ENCODE measurements at regions of chr12 and their contacts with region 1.

Region 1: DNA sequence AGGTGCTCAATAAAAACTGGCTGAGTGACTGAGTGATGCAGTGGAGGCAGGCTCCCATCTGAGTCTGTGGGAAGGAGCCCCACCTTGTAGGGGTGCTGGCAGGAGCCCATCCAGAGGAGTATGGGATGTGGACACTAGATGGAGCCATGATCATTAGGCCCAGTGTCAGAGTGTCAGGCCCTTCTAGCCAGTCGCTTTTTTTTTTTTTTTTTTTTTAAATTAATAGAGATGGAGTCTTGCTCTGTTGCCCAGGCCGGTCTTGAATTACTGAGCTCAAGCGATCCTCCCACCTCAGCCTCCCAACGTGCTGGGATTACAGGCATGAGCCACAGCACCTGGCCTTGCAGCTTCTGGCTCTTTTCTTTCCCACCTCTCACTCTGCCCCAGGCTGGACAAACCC is 11.5 kb downstream of the RITA1 start:
- DNase-seq: peak in 41 of 42 donors; percentile 35 to 89 (median 70)

Region 2: DNA sequence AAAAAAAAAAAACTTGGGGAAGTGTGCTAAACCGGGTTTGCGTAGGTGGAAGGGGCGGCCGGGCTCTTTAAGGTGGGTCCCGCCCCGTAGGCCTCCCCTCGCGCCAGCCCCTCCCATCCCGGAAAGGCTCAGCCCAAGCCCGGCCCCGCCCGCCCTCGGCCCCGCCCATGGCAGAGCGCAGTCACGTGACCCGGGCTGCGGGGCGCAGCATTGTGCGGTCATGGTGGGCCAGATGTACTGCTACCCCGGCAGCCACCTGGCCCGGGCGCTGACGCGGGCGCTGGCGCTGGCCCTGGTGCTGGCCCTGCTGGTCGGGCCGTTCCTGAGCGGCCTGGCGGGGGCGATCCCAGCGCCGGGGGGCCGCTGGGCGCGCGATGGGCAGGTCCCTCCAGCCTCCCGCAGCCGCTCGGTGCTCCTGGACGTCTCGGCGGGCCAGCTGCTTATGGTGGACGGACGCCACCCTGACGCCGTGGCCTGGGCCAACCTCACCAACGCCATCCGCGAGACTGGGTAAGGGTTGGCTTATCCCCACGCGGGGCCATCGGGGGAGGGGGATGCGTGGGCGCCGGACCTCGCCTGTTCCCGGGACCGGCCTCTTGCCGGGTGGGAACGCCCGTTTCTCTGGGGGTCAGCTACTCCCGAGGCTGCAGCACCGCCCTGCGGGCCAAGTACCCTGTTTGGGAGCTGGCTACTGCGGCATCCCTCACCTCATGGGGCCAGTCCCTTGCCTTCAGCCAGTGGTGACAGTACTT is 161.6 kb after region 1 on chr12 and contains the start of gene PLBD2:
- intact Hi-C with region 1: loop called (anchors 10 kb)
- DNase-seq: peak; percentile 84 to 98 (median 96)

Region 3: GRCh38 chr12:113422030-113422885 is 225.3 kb after region 1 on chr12 and contains the start of gene SDSL:
- intact Hi-C with region 1: loop called (anchors 10 kb)
- DNase-seq: peak in 41 of 42 donors; percentile 21 to 89 (median 60)

Region 4: DNA sequence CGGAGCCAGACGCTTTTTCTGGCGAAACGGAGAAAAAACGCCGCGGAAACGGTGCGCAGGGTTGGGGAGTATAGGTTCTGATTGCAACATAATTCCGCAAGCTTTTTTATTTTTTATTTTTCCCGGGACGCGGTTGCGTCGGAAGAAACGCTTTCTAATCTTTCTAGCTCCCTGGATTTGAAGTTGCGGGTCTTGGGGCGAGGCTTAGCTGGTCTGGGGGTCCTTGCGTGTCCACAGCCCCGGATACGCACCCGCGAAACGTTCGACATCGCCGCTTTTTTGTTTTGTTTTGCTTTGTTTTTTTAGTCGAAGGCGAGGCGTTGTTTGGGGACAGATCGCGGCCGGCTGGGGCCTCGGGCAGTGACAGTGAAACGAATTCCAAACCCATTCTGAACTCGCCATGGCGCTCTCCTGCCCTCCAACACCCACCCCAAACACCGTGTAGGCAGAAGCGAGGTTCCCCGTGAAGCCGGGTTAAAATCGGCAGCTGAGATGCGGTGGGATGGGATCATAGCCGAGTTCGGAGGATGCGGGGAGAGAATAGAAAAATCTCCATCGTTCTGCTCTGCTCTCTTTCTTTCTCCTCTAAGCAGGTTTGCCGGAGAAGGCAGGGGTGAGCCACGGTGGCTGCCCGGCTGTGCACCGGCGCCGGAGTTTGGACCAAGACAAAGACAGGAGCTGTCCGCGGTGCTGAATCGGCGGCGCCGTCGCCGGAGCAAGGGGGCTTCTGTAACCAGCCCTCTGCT is 282.8 kb after region 1 on chr12:
- intact Hi-C with region 1: no loop called
- DNase-seq: peak in 29 of 42 donors; percentile 12 to 76 (median 37)